GM10248 (cell line): ENCODE measurements at regions of chr4 and their contacts with region 1.

Region 1: GRCh38 chr4:3062471-3062870 is 11.9 kb downstream of the HTT-AS start:
- DNase-seq: no peak
- CTCF ChIP-seq: no peak

Region 2: GRCh38 chr4:2891294-2891693 is 171.2 kb before region 1 on chr4:
- CTCF ChIA-PET with region 1: no interaction called
- POLR2A ChIA-PET with region 1: no interaction called
- DNase-seq: no peak
- CTCF ChIP-seq: no peak

Region 3: GRCh38 chr4:3047464-3048286 is 14.8 kb before region 1 on chr4:
- CTCF ChIA-PET with region 1: interaction called, 21 read pairs
- POLR2A ChIA-PET with region 1: interaction called, 7 read pairs
- DNase-seq: peak; percentile 72
- CTCF ChIP-seq: peak; percentile 72

Region 4: DNA sequence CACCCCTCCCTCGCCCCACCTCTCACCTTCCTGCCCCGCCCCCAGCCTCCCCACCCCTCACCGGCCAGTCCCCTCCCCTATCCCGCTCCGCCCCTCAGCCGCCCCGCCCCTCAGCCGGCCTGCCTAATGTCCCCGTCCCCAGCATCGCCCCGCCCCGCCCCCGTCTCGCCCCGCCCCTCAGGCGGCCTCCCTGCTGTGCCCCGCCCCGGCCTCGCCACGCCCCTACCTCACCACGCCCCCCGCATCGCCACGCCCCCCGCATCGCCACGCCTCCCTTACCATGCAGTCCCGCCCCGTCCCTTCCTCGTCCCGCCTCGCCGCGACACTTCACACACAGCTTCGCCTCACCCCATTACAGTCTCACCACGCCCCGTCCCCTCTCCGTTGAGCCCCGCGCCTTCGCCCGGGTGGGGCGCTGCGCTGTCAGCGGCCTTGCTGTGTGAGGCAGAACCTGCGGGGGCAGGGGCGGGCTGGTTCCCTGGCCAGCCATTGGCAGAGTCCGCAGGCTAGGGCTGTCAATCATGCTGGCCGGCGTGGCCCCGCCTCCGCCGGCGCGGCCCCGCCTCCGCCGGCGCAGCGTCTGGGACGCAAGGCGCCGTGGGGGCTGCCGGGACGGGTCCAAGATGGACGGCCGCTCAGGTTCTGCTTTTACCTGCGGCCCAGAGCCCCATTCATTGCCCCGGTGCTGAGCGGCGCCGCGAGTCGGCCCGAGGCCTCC is 11.8 kb after region 1 on chr4 and contains the starts of genes HTT and HTT-AS:
- CTCF ChIA-PET with region 1: interaction called, 11 read pairs
- POLR2A ChIA-PET with region 1: no interaction called
- DNase-seq: peak; percentile 97
- CTCF ChIP-seq: no peak